Activated CD8-positive, alpha-beta T cell treated with anti-CD3 and anti-CD28 coated beads, Interleukin-2, amount 10 ng/mL, durations not matched to agents 7 days and 5 days (primary cell): ENCODE measurements at regions of chr7 and their contacts with region 1.

Region 1: DNA sequence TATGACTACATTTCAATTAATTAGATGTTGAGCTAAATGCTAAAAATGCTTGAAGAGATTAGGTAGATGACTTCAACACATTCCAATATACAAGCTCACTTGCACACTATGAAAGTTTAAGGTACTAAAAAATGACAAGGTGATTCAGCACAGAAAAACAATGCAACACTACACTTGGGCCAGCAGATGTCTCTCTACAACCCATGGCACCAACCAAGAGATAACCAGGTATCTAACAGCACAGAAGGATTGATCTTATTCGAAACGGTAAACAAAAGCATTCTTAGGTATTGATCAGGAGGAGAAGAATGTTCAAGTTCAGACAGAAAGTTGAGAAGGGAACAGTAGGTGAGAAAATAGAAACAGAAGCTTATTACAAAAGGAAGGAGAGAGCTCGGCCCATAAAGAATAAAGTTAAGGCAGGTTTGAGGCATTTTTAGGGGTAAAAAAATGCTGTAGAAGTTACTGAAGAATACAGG is 248.2 kb upstream of the KLF14 start:
- DNase-seq: peak; percentile 50
- ATAC-seq: peak; percentile 86
- H3K4me3 Mint-ChIP-seq: no peak overlapping the region
- H3K27ac Mint-ChIP-seq: no peak overlapping the region
- H3K4me1 Mint-ChIP-seq: peaks cover 29% of the 10 kb centered on the region
- H3K27me3 Mint-ChIP-seq: no peaks in the 10 kb centered on the region

Region 2: GRCh38 chr7:130622866-130623265 is 359.3 kb before region 1 on chr7:
- CTCF ChIA-PET with region 1: no interaction called
- POLR2A ChIA-PET with region 1: no interaction called
- DNase-seq: no peak
- ATAC-seq: no peak
- H3K4me3 Mint-ChIP-seq: no peak overlapping the region
- H3K27ac Mint-ChIP-seq: no peak overlapping the region
- H3K4me1 Mint-ChIP-seq: no peaks in the 10 kb centered on the region
- H3K27me3 Mint-ChIP-seq: no peaks in the 10 kb centered on the region

Region 3: GRCh38 chr7:130912862-130913631 is 69.2 kb before region 1 on chr7:
- CTCF ChIA-PET with region 1: interaction called, 16 read pairs
- POLR2A ChIA-PET with region 1: no interaction called
- DNase-seq: peak; percentile 89
- ATAC-seq: peak; percentile 92
- H3K4me3 Mint-ChIP-seq: peak overlapping the region; percentile 91
- H3K27ac Mint-ChIP-seq: peak overlapping the region; percentile 99
- H3K4me1 Mint-ChIP-seq: peaks cover 89% of the 10 kb centered on the region
- H3K27me3 Mint-ChIP-seq: no peaks in the 10 kb centered on the region

Region 4: DNA sequence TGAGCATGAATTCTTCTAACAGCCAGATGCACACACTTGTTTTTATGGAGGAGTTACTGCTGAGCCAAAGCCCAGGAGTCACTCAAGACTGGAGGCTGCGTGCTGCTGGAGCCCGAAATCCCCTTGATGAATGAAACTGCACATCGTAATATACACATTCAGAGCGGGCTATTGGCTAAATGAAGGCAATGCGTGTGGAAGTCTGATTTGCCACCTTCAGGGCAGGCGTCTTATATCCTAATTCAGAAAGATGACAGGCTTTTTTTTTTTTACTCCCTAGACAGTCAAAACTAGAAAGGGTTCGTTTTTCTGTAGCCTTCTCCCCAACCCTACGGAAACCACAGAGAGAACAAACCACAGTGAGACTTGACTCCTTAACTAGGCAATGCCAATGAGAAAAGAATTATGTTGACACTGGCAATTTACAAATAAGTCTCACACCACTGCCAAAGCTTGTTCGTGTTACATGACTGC is 21.0 kb before region 1 on chr7:
- CTCF ChIA-PET with region 1: interaction called, 75 read pairs
- POLR2A ChIA-PET with region 1: interaction called, 21 read pairs
- DNase-seq: peak; percentile 90
- ATAC-seq: peak; percentile 88
- H3K4me3 Mint-ChIP-seq: peak overlapping the region; percentile 91
- H3K27ac Mint-ChIP-seq: peak overlapping the region; percentile 99
- H3K4me1 Mint-ChIP-seq: peaks cover 48% of the 10 kb centered on the region
- H3K27me3 Mint-ChIP-seq: no peaks in the 10 kb centered on the region

Region 5: GRCh38 chr7:130996841-130997231 is 14.6 kb after region 1 on chr7:
- CTCF ChIA-PET with region 1: interaction called, 46 read pairs
- POLR2A ChIA-PET with region 1: no interaction called
- DNase-seq: peak; percentile 9
- ATAC-seq: peak; percentile 43
- H3K4me3 Mint-ChIP-seq: no peak overlapping the region
- H3K27ac Mint-ChIP-seq: peak overlapping the region; percentile 53
- H3K4me1 Mint-ChIP-seq: peaks cover 38% of the 10 kb centered on the region
- H3K27me3 Mint-ChIP-seq: no peaks in the 10 kb centered on the region

Region 6: GRCh38 chr7:131015655-131015954 is 33.4 kb after region 1 on chr7:
- CTCF ChIA-PET with region 1: interaction called, 24 read pairs
- POLR2A ChIA-PET with region 1: no interaction called
- DNase-seq: no peak
- ATAC-seq: no peak
- H3K4me3 Mint-ChIP-seq: no peak overlapping the region
- H3K27ac Mint-ChIP-seq: no peak overlapping the region
- H3K4me1 Mint-ChIP-seq: peaks cover 39% of the 10 kb centered on the region
- H3K27me3 Mint-ChIP-seq: no peaks in the 10 kb centered on the region

Region 7: GRCh38 chr7:131027287-131027773 is 45.1 kb after region 1 on chr7:
- CTCF ChIA-PET with region 1: interaction called, 27 read pairs
- POLR2A ChIA-PET with region 1: interaction called, 5 read pairs
- DNase-seq: no peak
- ATAC-seq: peak; percentile 42
- H3K4me3 Mint-ChIP-seq: no peak overlapping the region
- H3K27ac Mint-ChIP-seq: peak overlapping the region; percentile 22
- H3K4me1 Mint-ChIP-seq: peaks cover 57% of the 10 kb centered on the region
- H3K27me3 Mint-ChIP-seq: no peaks in the 10 kb centered on the region

Region 8: GRCh38 chr7:131057015-131057793 is 75.0 kb after region 1 on chr7:
- CTCF ChIA-PET with region 1: interaction called, 22 read pairs
- POLR2A ChIA-PET with region 1: no interaction called
- DNase-seq: peak; percentile 62
- ATAC-seq: peak; percentile 66
- H3K4me3 Mint-ChIP-seq: peak overlapping the region; percentile 70
- H3K27ac Mint-ChIP-seq: peak overlapping the region; percentile 95
- H3K4me1 Mint-ChIP-seq: peaks cover 57% of the 10 kb centered on the region
- H3K27me3 Mint-ChIP-seq: no peaks in the 10 kb centered on the region